Caco-2 (cell line): ENCODE measurements at regions of chr5 and their contacts with region 1.

Region 1: DNA sequence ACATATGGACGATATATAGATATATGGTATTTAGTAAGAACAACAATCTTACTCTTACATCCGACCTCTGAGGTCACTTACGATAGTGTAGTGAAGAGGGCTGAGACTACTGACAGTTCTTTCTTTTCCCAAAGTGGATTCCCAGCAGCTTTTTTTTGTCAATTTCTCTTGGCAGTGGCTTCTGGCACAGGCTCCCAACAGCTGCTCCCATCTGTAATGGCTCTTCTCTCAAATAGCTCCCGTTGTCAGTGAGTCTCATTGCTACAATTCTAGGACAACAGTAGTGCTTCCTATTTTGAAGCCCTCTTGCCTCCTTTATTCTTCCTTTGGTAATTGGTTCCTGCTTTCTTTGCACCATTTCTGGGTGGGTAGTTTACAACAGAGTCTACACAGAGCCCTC is 68.4 kb downstream of the SLC25A46 start:
- DNase-seq: no peak
- H3K4me3 ChIP-seq: no peak overlapping the region
- H3K4me3 Mint-ChIP-seq: no peak overlapping the region
- H3K27ac Mint-ChIP-seq: no peak overlapping the region
- H3K4me1 ChIP-seq: no peaks in the 10 kb centered on the region
- H3K4me1 Mint-ChIP-seq: no peaks in the 10 kb centered on the region
- H3K27me3 ChIP-seq: no peaks in the 10 kb centered on the region
- H3K27me3 Mint-ChIP-seq: no peaks in the 10 kb centered on the region
- CTCF ChIP-seq: no peak

Region 2: GRCh38 chr5:110716247-110717245 is 90.6 kb before region 1 on chr5:
- CTCF ChIA-PET with region 1: no interaction called
- POLR2A ChIA-PET with region 1: no interaction called
- intact Hi-C with region 1: no loop called
- DNase-seq: no peak
- H3K4me3 ChIP-seq: no peak overlapping the region
- H3K4me3 Mint-ChIP-seq: no peak overlapping the region
- H3K27ac Mint-ChIP-seq: no peak overlapping the region
- H3K4me1 ChIP-seq: no peaks in the 10 kb centered on the region
- H3K4me1 Mint-ChIP-seq: no peaks in the 10 kb centered on the region
- H3K27me3 ChIP-seq: no peaks in the 10 kb centered on the region
- H3K27me3 Mint-ChIP-seq: no peaks in the 10 kb centered on the region
- CTCF ChIP-seq: no peak

Region 3: DNA sequence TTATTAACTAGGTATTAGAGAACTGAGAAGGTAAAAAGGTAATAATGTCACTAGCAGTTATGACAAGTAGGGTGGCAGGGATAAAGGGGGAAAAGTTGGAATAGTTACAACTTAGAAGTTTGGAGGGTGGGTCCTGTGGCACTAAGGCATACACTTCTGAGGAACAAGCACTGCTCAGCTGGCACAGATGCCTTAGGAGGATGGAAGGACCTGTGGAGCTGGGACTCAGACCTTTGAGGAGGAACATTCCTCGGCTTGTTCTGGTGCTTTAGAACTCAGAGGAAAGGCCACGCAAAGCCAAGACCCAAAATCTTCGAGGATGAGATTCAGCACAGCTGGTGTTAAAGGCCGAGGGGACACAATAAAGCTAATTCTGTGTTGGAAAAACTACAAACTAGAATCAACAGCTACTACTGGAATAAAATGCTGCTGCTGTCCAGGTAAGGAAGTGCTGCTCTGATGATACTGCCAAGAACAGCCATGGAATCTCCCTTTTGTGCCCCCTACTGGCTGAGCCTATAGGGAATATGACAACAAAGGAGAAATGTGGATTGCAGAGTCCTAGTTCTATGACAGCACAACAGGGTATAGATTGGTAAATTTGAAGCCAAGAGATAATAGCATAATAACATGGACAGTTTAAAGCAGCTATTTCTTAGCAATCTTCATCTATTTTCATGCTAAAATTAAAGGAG is 58.4 kb after region 1 on chr5:
- CTCF ChIA-PET with region 1: no interaction called
- POLR2A ChIA-PET with region 1: no interaction called
- intact Hi-C with region 1: loop called (anchors 5 kb)
- DNase-seq: peak; percentile 36 to 56
- H3K4me3 ChIP-seq: no peak overlapping the region
- H3K4me3 Mint-ChIP-seq: no peak overlapping the region
- H3K27ac Mint-ChIP-seq: no peak overlapping the region
- H3K4me1 ChIP-seq: no peaks in the 10 kb centered on the region
- H3K4me1 Mint-ChIP-seq: no peaks in the 10 kb centered on the region
- H3K27me3 ChIP-seq: no peaks in the 10 kb centered on the region
- H3K27me3 Mint-ChIP-seq: peaks cover 17% of the 10 kb centered on the region
- CTCF ChIP-seq: peak; percentile 53 to 68

Region 4: GRCh38 chr5:110894805-110895204 is 87.6 kb after region 1 on chr5:
- CTCF ChIA-PET with region 1: no interaction called
- POLR2A ChIA-PET with region 1: no interaction called
- intact Hi-C with region 1: no loop called
- DNase-seq: no peak
- H3K4me3 ChIP-seq: no peak overlapping the region
- H3K4me3 Mint-ChIP-seq: no peak overlapping the region
- H3K27ac Mint-ChIP-seq: no peak overlapping the region
- H3K4me1 ChIP-seq: no peaks in the 10 kb centered on the region
- H3K4me1 Mint-ChIP-seq: no peaks in the 10 kb centered on the region
- H3K27me3 ChIP-seq: no peaks in the 10 kb centered on the region
- H3K27me3 Mint-ChIP-seq: no peaks in the 10 kb centered on the region
- CTCF ChIP-seq: no peak